BJ (cell line): ENCODE measurements at regions of chr5 and their contacts with region 1.

Region 1: GRCh38 chr5:39424736-39425637 is at the start of gene DAB2:
- DNase-seq: peak; percentile 91
- H3K4me3 ChIP-seq: peak within 1 kb of the TSS; percentile 73
- H3K27me3 ChIP-seq: no peaks in the 10 kb centered on the region
- CTCF ChIP-seq: peak; percentile 82
- polyA plus RNA-seq, gene DAB2: 168 and 181 TPM in 2 replicates

Region 2: GRCh38 chr5:39399135-39400036 is 25.6 kb before region 1 on chr5:
- CTCF ChIA-PET with region 1: interaction called, 5 read pairs
- POLR2A ChIA-PET with region 1: interaction called, 20 read pairs
- DNase-seq: peak; percentile 96
- H3K4me3 ChIP-seq: no peak overlapping the region
- H3K27me3 ChIP-seq: no peaks in the 10 kb centered on the region
- CTCF ChIP-seq: no peak

Region 3: DNA sequence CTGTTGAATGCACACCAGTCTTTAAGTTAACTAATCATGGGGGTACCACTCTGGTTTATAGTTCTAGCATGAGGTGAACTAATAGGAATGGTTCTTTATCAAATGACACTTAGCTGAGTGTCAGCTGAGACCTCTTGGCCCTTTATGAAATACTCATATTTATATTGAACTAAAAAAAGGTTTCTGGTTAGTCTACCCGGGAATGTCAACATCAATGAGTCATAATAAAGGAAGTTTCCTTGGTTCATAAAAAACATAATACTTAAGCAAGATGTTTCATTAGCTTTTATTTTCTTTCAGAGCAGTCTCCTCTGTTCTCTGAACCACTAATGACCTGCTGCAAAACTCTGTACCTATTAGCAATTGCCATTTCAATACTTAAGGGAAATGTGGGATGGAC is 13.9 kb before region 1 on chr5:
- CTCF ChIA-PET with region 1: interaction called, 13 read pairs
- POLR2A ChIA-PET with region 1: interaction called, 13 read pairs
- DNase-seq: peak; percentile 51
- H3K4me3 ChIP-seq: no peak overlapping the region
- H3K27me3 ChIP-seq: no peaks in the 10 kb centered on the region
- CTCF ChIP-seq: no peak

Region 4: GRCh38 chr5:39519566-39520231 is 94.7 kb after region 1 on chr5:
- CTCF ChIA-PET with region 1: interaction called, 14 read pairs
- POLR2A ChIA-PET with region 1: interaction called, 6 read pairs
- DNase-seq: no peak
- H3K4me3 ChIP-seq: no peak overlapping the region
- H3K27me3 ChIP-seq: no peaks in the 10 kb centered on the region
- CTCF ChIP-seq: no peak

Region 5: DNA sequence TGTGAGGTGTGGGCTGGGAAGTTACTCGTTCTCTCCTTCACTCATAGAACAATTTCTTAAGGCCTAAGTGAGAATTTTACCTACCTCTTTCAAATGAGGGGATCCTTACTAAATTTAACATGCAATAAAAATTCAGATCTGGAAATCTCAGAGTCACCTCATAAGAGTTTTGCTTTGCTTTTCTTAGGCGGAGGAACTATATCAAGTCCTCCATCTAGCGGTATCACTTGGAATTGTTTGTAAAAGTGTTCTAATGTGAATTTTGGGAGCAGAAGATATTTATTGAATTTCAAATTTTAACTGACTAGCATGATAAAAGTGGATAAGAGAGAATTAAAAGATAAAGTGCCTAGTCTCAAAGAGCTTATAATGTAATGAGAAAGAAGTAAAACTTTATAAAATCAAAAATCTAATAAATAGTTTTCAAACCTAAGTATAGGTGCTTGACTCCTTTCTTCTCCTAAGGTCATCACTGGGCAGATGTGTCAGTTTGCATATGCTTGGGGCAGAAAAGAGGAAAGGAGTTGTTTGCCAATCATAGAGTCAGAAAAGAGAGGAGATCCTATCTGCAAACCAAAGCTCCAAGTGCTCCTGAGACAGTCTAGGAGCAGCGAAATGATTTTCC is 145.5 kb after region 1 on chr5:
- CTCF ChIA-PET with region 1: interaction called, 10 read pairs
- POLR2A ChIA-PET with region 1: no interaction called
- DNase-seq: no peak
- H3K4me3 ChIP-seq: no peak overlapping the region
- H3K27me3 ChIP-seq: peaks cover 6% of the 10 kb centered on the region
- CTCF ChIP-seq: peak; percentile 63

Region 6: DNA sequence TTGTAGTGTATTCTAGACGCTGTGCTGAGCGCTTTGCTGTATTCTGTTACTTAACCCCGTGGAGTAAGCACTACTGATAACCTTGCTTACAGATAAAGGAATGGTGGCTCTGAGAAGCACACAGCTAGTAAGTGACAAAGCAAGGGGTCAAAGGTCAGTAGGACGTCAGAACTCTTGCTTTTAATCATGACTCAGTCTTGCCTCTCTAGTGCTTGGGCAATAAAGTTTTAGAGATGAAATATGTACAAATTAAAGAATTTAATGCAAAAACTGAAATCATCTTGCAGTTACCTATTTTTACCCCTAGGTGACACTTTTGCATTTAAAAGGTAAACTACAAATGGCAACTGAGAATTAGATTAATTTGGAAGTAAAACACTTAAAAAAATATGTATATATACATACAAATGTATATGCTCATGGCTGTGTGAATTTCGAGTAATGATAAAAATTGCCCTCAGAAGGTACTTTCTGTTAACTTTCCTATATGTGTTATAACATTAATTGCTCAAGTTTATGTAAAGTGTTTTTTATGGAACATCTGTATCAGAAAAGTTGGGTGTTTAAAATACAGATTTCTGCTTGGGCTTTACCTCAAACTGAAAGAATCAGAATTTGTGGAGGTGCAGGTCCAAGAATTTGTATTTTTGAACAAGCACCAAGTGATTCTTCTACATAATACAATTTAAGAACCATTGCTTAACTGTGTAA is 174.9 kb after region 1 on chr5:
- CTCF ChIA-PET with region 1: no interaction called
- POLR2A ChIA-PET with region 1: no interaction called
- DNase-seq: no peak
- H3K4me3 ChIP-seq: no peak overlapping the region
- H3K27me3 ChIP-seq: no peaks in the 10 kb centered on the region; the same call in 1 of the 2 replicates
- CTCF ChIP-seq: peak; percentile 34

Region 7: DNA sequence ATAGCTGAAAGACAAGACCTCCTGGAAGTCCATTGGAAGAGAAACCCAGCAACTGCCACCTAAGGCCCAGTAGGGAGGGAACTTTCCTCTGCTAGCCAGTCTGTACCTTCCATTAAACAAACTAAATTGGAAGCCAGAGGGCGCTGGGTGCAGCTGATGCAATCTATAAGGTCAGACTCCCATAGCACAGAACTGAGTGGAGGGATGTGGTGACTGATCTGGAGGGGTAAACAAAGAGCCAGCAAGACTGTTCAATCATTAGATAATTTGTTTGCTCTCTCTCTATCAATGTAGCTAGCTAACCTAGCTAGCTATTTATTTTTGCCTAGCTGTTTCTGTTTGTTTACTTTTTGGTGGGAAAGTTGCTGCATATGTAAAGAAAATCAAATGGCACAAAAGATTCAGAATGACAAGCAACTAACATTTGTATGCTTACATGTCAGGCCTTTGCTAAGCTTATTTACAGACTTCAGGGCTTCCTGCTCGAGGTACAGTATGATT is 291.6 kb after region 1 on chr5:
- CTCF ChIA-PET with region 1: no interaction called
- POLR2A ChIA-PET with region 1: no interaction called
- DNase-seq: no peak
- H3K4me3 ChIP-seq: no peak overlapping the region
- H3K27me3 ChIP-seq: no peaks in the 10 kb centered on the region
- CTCF ChIP-seq: peak; percentile 36